Activated T-helper 2 cell treated with anti-CD3 and anti-CD28 coated beads, Interferon-gamma antibody, Interleukin-2, Interleukin-4, amounts not matched to agents 10 μg/mL and 5 μg/mL and 100 μg/mL, durations not matched to agents 14 hours and 24 hours and 36 hours (primary cell): ENCODE measurements at regions of chr17 and their contacts with region 1.

Region 1: DNA sequence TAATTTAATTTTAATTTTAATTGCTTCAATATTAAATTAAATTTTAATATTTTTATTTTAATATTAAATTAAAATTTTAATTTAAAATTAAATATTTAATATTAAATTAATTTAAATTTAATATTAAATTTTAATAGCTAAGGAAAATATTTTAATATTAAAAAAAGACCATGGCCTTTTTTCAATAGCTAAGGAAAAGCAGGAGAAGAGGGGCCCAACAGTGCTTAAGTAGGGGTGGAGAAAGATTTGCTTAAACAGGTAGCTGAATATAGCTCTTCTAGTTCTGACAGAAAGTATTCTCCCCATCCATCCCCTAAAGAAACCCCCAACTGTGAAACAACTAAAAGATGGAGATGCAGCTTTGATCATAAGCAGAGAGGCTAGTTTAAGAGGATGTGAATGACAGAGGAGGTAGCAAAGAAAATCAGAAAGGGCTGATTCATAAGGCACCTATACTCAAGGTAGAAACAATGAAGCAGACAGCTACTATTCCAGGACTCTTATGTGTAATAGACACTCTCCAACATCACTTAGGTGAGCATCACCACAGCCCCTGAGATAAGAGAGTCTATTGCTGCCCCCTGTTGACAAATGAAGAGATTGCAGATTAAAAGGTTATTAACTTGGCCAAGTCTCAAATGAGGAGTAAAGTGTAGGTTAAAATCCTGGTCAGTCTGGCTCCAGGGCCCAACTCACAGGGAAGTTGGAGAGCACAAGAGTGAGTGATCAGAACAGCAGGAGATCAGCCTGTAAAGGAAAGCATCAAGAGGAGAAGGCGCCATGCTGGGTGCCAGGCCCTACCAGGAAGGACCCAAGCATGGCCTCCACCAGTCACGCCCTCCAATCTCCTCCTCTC is 7.8 kb upstream of the RNASEK start:
- DNase-seq: peak; percentile 32
- H3K4me3 Mint-ChIP-seq: no peak overlapping the region
- H3K27ac Mint-ChIP-seq: no peak overlapping the region
- H3K4me1 Mint-ChIP-seq: peaks cover 12% of the 10 kb centered on the region
- H3K27me3 Mint-ChIP-seq: no peaks in the 10 kb centered on the region

Region 2: GRCh38 chr17:6913608-6914443 is 90.8 kb before region 1 on chr17:
- intact Hi-C with region 1: loop called (anchors 1 kb)
- DNase-seq: peak; percentile 55
- H3K4me3 Mint-ChIP-seq: peak overlapping the region; percentile 65
- H3K27ac Mint-ChIP-seq: no peak overlapping the region
- H3K4me1 Mint-ChIP-seq: peaks cover 30% of the 10 kb centered on the region
- H3K27me3 Mint-ChIP-seq: peaks cover 27% of the 10 kb centered on the region

Region 3: GRCh38 chr17:6981426-6981825 is 23.2 kb before region 1 on chr17:
- intact Hi-C with region 1: no loop called
- DNase-seq: no peak
- H3K4me3 Mint-ChIP-seq: no peak overlapping the region
- H3K27ac Mint-ChIP-seq: no peak overlapping the region
- H3K4me1 Mint-ChIP-seq: peaks cover 5% of the 10 kb centered on the region
- H3K27me3 Mint-ChIP-seq: peaks cover 3% of the 10 kb centered on the region